Breast epithelium (tissue), 4 donors: ENCODE measurements at regions of chr6 and their contacts with region 1.

Region 1: DNA sequence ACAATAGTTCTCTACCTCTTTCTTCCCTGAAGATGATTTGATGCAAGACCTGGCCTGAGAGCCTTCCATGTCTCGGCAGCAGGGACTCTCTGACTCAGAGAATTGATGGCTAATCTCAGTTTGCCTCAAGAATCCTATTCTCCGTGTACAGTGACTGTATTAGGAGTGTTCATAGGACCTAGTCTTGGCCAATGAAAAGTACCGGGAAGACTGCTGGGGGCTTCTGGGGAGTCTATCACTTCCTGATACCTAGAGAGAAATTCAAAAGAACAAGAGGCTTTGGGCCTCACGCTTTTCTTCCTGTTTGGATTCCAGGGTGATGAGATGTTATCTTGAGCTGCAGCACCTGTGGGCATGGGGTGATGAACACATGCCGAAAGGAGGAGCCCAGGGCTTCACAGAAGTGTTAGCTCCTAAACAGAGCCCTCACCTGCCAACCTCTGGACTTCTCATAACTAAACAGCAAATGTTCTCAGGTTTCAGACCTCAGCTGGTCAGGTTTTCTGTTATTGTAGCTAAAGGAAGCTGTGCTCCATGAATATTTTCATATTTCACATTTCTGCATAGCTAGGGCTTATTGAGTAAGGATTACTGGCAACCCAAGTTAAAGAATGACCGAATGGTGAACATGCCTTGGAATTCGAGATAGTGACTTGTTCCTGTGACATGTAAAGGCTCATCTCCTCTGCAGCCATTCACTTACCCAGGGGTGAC is 323.1 kb upstream of the AGPAT4 start:
- DNase-seq: no peak
- H3K4me3 ChIP-seq: no peak overlapping the region
- H3K27ac ChIP-seq: no peak overlapping the region
- H3K4me1 ChIP-seq: no peaks in the 10 kb centered on the region
- H3K27me3 ChIP-seq: no peaks in the 10 kb centered on the region
- CTCF ChIP-seq: no peak
- POLR2A ChIP-seq: no peak

Region 2: DNA sequence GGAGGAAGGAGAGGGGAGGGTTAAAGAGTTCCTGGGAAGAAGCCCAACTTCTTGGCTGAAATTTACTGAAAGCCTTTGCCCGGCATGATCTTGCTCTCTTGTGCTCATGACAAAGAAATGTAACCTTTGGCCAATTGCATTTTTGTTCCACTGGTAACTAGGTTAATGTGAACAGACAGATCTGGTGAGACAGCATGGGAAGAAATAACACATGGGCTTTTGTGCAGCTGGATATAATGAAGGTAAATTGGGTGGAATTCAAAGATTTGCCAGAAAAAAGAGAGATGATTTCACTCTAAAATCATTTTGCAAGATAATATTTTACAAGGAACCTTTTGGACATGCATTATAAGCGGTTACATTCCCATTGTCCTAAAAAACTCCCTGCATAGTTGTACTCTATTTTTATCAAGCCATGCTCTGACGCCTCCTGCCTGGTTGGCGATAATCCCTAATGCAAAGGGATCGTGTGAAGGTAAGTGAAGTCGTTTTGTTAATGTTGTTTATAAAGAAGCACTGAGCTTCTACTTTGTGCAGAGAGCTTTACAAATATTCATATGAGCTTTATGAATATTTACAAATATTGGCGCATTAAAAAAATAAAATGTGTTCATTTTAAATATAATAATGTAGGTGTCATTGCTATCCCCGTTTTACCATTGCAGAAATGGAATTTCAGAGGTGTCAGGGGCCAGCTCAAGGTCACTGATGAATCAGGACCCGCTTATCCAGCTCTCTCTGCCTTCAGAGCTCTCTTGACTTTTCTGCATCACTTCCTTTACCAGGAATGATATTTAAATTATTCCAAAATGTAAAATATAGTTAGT is 161.8 kb before region 1 on chr6:
- intact Hi-C with region 1: no loop called
- DNase-seq: peak in 1 of 2 donors; percentile 38
- H3K4me3 ChIP-seq: peak overlapping the region in 1 of 3 donors; percentile 5
- H3K27ac ChIP-seq: peak overlapping the region; percentile 79 to 80
- H3K4me1 ChIP-seq: peaks cover 0 to 3% of the 10 kb centered on the region in 2 donors
- H3K27me3 ChIP-seq: no peaks in the 10 kb centered on the region
- CTCF ChIP-seq: no peak
- POLR2A ChIP-seq: no peak

Region 3: GRCh38 chr6:163387317-163387716 is 1790.4 kb after region 1 on chr6:
- intact Hi-C with region 1: loop called (anchors 5 kb)
- DNase-seq: no peak
- H3K4me3 ChIP-seq: no peak overlapping the region
- H3K27ac ChIP-seq: no peak overlapping the region
- H3K4me1 ChIP-seq: no peaks in the 10 kb centered on the region
- H3K27me3 ChIP-seq: no peaks in the 10 kb centered on the region
- CTCF ChIP-seq: no peak
- POLR2A ChIP-seq: no peak